Caco-2 (cell line): ENCODE measurements at regions of chr14 and their contacts with region 1.

Region 1: GRCh38 chr14:68191567-68192321 is 372.2 kb downstream of the RAD51B start:
- DNase-seq: peak; percentile 45 to 61
- H3K4me3 ChIP-seq: no peak overlapping the region
- H3K4me3 Mint-ChIP-seq: no peak overlapping the region
- H3K27ac Mint-ChIP-seq: no peak overlapping the region
- H3K4me1 ChIP-seq: peaks cover 16% of the 10 kb centered on the region
- H3K4me1 Mint-ChIP-seq: no peaks in the 10 kb centered on the region
- H3K27me3 ChIP-seq: no peaks in the 10 kb centered on the region
- H3K27me3 Mint-ChIP-seq: no peaks in the 10 kb centered on the region
- CTCF ChIP-seq: no peak

Region 2: GRCh38 chr14:68164711-68165113 is 27.0 kb before region 1 on chr14:
- CTCF ChIA-PET with region 1: no interaction called
- POLR2A ChIA-PET with region 1: no interaction called
- intact Hi-C with region 1: loop called (anchors 1 kb)
- DNase-seq: peak in 1 of 2 experiments; percentile 16
- H3K4me3 ChIP-seq: no peak overlapping the region
- H3K4me3 Mint-ChIP-seq: peak overlapping the region; percentile 36
- H3K27ac Mint-ChIP-seq: peak overlapping the region; percentile 22
- H3K4me1 ChIP-seq: peaks cover 44% of the 10 kb centered on the region
- H3K4me1 Mint-ChIP-seq: peaks cover 40% of the 10 kb centered on the region
- H3K27me3 ChIP-seq: no peaks in the 10 kb centered on the region
- H3K27me3 Mint-ChIP-seq: no peaks in the 10 kb centered on the region
- CTCF ChIP-seq: no peak

Region 3: GRCh38 chr14:68172627-68173026 is 19.1 kb before region 1 on chr14:
- CTCF ChIA-PET with region 1: interaction called, 5 read pairs
- POLR2A ChIA-PET with region 1: no interaction called
- intact Hi-C with region 1: loop called (anchors 1 kb)
- DNase-seq: peak in 1 of 2 experiments; percentile 58
- H3K4me3 ChIP-seq: no peak overlapping the region
- H3K4me3 Mint-ChIP-seq: no peak overlapping the region
- H3K27ac Mint-ChIP-seq: no peak overlapping the region
- H3K4me1 ChIP-seq: peaks cover 27% of the 10 kb centered on the region
- H3K4me1 Mint-ChIP-seq: peaks cover 6% of the 10 kb centered on the region
- H3K27me3 ChIP-seq: no peaks in the 10 kb centered on the region
- H3K27me3 Mint-ChIP-seq: no peaks in the 10 kb centered on the region
- CTCF ChIP-seq: no peak

Region 4: DNA sequence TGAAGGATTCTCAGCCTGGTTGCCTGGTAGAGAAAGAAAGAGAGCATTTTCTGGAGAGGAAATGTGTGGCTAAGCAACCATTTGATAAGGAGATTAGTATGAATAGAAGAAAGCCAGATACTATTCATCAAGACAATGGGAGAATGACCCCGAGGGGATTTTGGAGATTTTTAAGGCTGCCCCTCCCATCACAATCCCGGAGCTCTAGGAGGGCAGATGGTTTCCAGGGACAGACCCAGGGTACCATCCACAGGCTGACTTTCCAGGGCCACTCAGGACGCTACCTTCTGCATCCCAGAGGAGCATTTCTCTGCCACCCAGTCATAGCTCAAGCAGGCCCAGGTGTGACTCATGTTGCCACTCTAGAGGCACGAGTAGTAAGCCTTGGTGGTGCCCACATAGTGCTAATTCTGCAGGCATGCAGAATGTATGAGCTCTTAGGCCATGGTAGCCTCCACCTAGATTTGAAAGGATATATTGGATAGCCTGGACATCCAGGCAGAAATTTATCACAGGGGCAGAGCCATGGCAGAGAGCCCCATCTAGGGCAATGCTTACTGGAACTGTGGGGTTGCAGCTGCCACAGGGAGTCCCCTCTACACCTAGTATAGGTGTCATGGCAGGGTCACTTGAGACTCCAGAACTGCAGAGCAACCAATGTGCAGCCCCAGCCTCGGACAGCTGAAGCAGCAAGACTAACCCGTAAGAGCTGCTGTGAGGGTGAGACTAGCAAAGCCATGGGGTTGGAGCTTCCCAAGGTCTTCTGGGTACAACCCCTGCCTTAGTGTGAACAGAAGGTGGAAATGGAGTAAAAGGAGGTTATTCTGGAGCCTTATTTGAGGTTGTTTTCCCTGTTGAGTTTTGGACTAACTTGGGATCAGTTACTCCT is 235.2 kb after region 1 on chr14:
- CTCF ChIA-PET with region 1: no interaction called
- POLR2A ChIA-PET with region 1: no interaction called
- intact Hi-C with region 1: no loop called
- DNase-seq: no peak
- H3K4me3 ChIP-seq: no peak overlapping the region
- H3K4me3 Mint-ChIP-seq: no peak overlapping the region
- H3K27ac Mint-ChIP-seq: no peak overlapping the region
- H3K4me1 ChIP-seq: peaks cover 8% of the 10 kb centered on the region; the same call in 1 of the 2 replicates
- H3K4me1 Mint-ChIP-seq: peaks cover 6% of the 10 kb centered on the region
- H3K27me3 ChIP-seq: no peaks in the 10 kb centered on the region
- H3K27me3 Mint-ChIP-seq: no peaks in the 10 kb centered on the region
- CTCF ChIP-seq: no peak